ENCODE measurements at regions of chr12 and their contacts with region 1.

Region 1: GRCh38 chr12:1533602-1534304 is 60.6 kb downstream of the FBXL14 start:
- DNase-seq: peak; percentile 25
- ATAC-seq: peak; percentile 82
- H3K4me3 Mint-ChIP-seq: peak overlapping the region; percentile 76
- H3K27ac Mint-ChIP-seq: peak overlapping the region; percentile 13
- H3K4me1 Mint-ChIP-seq: peaks cover 30% of the 10 kb centered on the region
- H3K27me3 Mint-ChIP-seq: peaks cover 47% of the 10 kb centered on the region
- CTCF ChIP-seq: no peak

Region 2: DNA sequence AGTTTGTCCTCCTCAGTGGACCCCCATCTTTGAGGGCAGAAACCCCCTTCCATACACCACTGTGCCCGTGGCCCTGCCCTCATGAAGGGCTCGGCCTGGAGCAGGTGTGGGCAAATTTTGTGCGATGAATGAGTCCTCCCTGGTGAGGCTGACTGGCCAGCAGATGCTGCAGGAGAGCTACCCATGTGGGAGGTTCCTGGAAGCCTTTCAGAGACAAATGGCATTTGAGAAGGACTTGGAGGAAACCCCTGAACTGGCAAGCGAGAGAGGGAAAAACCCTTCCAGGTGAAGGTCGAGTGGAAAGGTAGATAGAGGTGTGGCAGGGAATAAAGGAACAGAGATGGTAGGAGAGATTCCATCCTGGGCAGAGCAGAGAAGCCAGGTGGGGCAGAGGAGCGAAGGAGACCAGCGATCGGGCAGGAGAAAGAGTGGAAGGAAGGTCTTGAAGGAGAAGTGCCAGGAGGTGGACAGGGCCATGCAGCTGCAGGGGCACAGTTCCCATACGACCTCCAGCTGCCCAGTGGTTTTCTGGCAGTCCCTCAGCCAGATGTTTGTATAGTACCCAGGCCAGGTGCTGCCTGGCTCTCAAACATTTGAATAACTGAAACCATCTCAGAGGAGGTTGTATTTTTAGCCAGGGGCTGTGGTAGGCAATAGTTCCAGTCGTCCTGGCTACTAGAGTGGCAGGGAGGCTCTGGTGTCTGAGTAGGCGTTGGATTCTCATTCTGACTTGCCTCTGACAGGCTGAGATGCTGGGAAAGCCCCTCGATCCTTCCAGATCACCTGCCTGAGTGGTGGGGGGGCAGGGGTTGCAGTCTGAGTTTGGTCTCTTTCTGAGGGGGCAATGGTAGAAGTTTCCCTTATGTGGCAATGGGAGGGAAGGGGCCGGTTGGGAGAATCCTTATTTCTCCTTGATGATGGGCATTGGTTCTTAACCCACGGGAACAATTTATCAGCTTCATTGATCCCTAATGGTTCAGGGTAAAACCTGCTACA is 20.5 kb after region 1 on chr12:
- CTCF ChIA-PET with region 1: no interaction called
- POLR2A ChIA-PET with region 1: interaction called, 5 read pairs
- intact Hi-C with region 1: loop called (anchors 1 kb)
- DNase-seq: peak; percentile 36
- ATAC-seq: peak; percentile 89
- H3K4me3 Mint-ChIP-seq: peak overlapping the region; percentile 11
- H3K27ac Mint-ChIP-seq: peak overlapping the region; percentile 81
- H3K4me1 Mint-ChIP-seq: peaks cover 15% of the 10 kb centered on the region
- H3K27me3 Mint-ChIP-seq: no peaks in the 10 kb centered on the region
- CTCF ChIP-seq: no peak

Region 3: GRCh38 chr12:1747609-1748008 is 213.9 kb after region 1 on chr12:
- CTCF ChIA-PET with region 1: no interaction called
- POLR2A ChIA-PET with region 1: no interaction called
- intact Hi-C with region 1: no loop called
- DNase-seq: no peak
- ATAC-seq: no peak
- H3K4me3 Mint-ChIP-seq: no peak overlapping the region
- H3K27ac Mint-ChIP-seq: no peak overlapping the region
- H3K4me1 Mint-ChIP-seq: peaks cover 37% of the 10 kb centered on the region
- H3K27me3 Mint-ChIP-seq: no peaks in the 10 kb centered on the region
- CTCF ChIP-seq: no peak